Mucosa of descending colon (tissue), 3 donors: ENCODE measurements at regions of chr4 and their contacts with region 1.

Region 1: DNA sequence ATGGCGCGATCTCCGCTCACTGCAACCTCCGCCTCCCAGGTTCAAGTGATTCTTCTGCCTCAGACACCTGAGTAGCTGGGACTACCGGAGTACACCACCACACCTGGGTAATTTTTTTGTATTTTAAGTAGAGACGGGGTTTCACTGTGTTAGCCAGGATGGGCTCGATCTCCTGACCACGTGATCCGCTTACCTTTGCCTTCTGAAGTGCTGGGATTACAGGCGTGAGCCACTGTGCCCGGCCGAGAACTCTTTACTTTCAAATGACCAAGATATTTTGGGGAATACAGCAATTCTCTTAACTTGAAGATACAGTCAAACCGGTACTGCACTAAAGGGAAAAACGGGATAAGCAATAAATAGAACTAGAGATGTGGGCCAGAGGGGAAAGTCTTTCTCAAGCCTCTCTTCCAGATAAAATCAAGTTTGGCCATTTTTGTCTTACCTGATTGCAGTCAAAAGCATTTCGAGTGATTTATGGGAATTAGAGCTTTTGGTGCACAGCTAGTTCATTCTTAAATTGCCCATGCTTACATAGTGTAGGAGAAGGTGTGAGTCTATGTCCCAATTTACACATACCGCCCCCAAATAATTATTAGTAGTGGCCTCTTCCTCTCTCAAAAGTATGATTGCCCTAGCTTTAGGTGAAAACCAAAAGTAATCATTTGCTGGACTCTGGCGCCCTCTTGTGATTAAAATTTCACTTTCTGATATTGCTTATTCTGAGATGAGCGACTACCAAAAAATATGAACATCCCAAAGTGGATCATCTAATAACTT is 53.2 kb upstream of the ABCG2 start:
- DNase-seq: peak in 1 of 3 donors; percentile 83
- ATAC-seq: peak; percentile 56
- H3K4me3 ChIP-seq: no peak overlapping the region
- H3K4me1 ChIP-seq: no peaks in the 10 kb centered on the region
- CTCF ChIP-seq: peak; percentile 37

Region 2: DNA sequence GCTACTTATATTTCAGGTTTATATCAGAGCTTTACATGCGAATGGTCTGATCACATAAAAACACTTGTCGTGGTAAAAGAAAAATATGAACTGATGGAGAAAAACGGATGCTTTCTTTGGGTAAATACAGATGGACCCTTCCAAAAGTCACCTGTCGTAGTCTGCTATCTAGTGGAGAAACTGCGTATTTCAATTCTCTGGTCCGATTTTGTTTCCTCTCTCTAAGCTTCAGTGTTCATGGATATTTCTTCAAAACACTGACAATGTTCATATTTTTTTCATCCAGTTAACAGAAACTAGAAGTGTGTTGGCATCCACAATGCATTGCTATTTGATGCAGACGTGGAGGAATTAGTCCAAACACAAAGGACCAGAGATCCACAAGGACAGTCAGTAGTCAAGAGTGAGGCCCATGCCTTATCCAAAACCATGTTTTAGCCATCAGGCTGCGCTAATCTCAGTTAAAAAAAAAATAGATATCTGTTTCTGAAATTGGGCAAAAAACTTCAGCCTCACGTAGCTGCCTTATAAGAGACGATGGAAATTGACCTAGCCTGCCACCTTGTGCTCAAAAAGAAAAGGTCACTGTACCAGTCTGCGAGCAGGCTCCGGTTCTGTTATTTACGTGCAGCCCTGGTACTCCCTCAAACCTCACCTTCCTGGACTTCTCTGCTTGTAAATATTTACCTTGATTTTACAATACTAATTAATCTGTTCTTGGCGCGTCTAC is 362.9 kb before region 1 on chr4:
- intact Hi-C with region 1: loop called (anchors 10 kb)
- DNase-seq: peak in 1 of 3 donors; percentile 53
- ATAC-seq: peak; percentile 76
- H3K4me3 ChIP-seq: no peak overlapping the region
- H3K4me1 ChIP-seq: no peaks in the 10 kb centered on the region
- CTCF ChIP-seq: no peak

Region 3: GRCh38 chr4:88033309-88033708 is 178.4 kb before region 1 on chr4:
- intact Hi-C with region 1: loop called in 1 of 2 experiments (anchors 5 kb)
- DNase-seq: peak in 1 of 3 donors; percentile 75
- ATAC-seq: peak; percentile 79
- H3K4me3 ChIP-seq: no peak overlapping the region
- H3K4me1 ChIP-seq: no peaks in the 10 kb centered on the region
- CTCF ChIP-seq: peak; percentile 49

Region 4: DNA sequence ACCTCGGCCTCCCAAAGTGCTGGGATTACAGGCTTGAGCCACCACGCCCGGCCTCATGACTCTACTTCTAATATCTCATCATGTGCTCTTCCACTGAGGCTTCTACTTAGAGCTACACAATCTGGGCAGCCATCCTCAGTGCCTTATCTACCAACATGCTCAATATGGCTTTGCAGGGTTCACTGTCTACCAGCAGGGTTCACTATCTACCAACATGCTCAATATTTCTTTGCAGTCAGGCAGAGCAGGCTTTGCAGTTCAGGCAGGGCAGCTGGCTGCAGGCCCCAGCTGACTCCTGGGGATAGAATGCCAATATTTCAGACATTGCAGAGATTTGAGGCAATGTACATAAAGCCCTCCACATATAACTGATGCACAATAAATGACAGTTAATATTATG is 156.8 kb before region 1 on chr4:
- intact Hi-C with region 1: loop called (anchors 5 to 10 kb)
- DNase-seq: peak in 1 of 3 donors; percentile 70
- ATAC-seq: peak; percentile 92
- H3K4me3 ChIP-seq: no peak overlapping the region
- H3K4me1 ChIP-seq: no peaks in the 10 kb centered on the region
- CTCF ChIP-seq: peak; percentile 10

Region 5: DNA sequence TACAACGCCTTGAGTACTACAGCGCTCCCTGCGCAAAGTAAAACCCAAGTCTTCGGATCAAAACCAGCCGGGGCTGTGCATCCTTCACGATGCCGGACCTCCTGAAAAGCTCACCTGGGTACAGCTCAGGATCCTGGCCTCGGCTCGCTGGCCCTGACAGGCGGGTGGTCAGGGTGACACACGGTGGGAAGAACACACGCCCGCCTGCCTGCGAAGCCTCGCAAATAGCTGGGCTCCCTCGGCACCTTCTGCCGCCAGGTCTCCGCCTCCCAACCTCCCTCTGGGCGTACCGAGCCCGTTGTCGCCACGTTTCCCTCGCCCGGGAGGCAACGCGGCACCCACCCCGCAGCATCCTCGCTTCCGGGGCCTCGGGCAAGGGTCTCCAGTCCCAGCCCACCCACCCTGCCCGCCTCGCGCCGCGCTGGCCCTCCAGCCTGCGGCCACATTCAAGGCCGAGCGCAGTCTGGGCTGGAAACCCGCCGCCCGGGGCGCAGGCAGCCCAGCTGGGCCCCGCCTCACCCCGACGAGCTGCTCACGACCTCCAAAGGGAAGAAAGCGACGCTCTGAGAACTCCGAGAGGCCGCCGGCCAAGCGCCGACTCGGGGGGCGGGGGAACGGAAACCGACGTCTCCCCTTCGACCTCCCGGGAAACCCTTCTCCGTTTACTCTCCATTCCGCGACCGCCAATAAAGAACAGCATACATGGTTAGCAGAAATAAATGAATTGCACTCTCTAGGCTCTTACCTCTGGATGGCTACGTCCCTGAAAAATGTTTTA is 72.2 kb after region 1 on chr4:
- intact Hi-C with region 1: no loop called
- DNase-seq: peak; percentile 57 to 83 (median 74)
- ATAC-seq: peak; percentile 58
- H3K4me3 ChIP-seq: peak overlapping the region; percentile 38
- H3K4me1 ChIP-seq: peaks cover 7% of the 10 kb centered on the region
- CTCF ChIP-seq: no peak

Region 6: DNA sequence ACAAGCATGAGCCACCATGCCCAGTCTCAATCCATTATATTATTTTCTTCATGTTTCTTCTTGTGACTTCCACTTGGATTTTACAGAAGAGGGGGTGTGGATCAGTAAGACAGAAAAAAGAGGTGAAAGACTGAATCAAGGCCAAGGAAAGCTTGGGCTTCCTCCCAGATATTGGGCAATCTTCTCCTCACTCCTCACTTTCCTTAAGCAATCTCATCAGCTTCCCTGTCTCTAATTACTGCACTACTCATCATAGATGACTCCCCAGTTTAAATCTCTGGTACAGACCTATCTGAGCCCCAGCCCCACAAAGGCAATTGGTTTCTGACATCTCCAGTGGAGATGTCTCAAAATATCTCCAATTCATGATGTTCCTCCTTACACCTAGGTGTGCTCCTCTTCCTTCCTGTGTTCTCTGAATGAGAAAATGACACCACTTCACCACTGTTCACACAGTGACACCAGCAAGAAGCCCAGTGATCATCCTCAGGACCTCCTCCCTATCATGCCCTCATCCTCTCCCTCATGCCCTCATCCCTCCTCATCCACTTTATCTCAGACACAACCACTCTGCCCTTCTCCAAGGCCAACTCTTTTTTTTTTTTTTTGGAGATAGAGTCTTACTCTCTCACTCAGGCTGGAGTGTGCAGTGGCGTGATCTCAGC is 122.2 kb after region 1 on chr4:
- intact Hi-C with region 1: no loop called
- DNase-seq: no peak
- ATAC-seq: no peak
- H3K4me3 ChIP-seq: no peak overlapping the region
- H3K4me1 ChIP-seq: no peaks in the 10 kb centered on the region
- CTCF ChIP-seq: no peak

Region 7: DNA sequence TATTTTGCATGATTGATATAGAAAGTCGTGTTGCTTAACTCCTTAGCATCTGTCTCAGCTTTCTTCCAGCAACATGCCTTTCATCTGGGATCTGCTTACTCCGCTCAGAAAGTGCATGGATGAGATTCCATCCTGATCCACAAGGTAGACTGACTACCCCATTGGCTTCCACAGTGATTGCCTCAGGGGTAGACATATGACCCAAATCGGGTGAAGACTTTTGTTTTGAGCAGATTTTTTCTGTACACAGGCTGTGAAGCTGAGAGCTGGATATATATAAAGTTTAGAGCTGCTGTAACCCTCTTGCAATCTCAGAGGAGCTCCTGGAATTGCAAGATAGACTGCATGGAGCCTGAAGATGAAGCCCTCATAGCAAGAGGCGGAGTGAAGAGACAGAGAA is 158.3 kb after region 1 on chr4:
- intact Hi-C with region 1: loop called in 1 of 2 experiments (anchors 5 kb)
- DNase-seq: no peak
- ATAC-seq: no peak
- H3K4me3 ChIP-seq: no peak overlapping the region
- H3K4me1 ChIP-seq: no peaks in the 10 kb centered on the region
- CTCF ChIP-seq: no peak

Region 8: DNA sequence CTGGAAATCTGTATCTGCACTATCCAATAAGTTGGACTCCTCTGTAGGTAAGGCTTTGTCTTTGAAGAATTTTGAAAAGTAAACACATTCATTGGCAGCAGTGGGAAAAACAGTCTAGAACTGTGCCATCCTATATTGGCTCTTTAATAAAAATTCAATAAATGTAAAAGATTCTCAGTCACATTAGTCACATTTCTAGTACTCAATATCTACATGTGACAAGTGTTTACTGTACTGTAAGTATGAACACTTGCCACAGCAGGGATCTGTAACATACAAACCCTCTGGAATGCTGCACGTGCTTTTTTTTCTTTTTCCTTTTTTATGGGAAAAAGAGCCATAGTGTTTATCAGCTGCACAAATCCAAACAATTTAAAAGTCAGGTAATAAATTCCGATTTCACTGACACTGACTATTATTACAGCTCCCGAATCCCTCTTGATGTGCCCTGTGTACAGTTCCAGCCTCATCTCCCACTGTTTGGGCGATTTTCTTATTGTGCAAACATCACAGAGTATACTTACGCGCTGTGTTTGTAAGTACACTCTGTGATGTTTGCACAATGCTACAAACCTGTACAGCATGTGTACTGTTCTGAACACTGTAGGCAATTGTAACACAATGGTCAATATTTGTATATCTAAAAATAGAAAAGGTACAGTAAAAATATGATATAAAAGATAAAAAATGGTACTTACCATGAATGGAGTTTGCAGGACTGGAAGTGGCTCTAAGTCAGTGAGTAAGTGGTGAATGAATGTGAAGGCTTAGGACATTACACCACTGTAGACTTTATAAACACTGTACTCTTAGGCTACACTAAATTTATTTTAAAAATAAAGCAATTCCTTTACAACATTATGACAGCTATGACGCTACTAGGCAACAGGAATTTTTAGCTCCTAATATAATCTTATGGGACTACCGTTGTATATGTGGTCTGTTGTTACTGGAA is 303.2 kb after region 1 on chr4:
- intact Hi-C with region 1: loop called in 1 of 2 experiments (anchors 10 kb)
- DNase-seq: no peak
- ATAC-seq: peak; percentile 85
- H3K4me3 ChIP-seq: no peak overlapping the region
- H3K4me1 ChIP-seq: peaks cover 6% of the 10 kb centered on the region
- CTCF ChIP-seq: no peak